AG04449 (cell line): ENCODE measurements at regions of chr9 and their contacts with region 1.

Region 1: DNA sequence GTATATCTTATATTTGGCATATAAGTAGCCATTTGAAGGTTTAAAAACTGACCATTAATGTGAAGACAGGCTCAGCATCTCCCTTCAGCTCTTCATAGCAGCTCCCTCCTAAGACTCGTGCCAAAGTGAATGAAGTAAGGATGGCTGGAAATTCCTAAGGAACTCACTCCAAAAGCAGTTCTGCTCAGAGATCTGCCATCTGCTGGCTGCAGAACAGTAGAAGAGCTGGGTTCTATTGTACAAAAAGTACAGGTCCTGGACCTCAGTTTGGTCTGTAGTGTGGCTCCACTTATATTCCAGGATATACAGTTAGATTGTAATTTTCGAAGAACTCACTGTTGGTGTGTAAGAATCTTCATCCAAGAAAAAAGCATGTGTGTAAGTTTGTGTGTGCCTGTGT is 104.9 kb upstream of the RUSC2 start:
- DNase-seq: peak; percentile 34
- H3K4me3 ChIP-seq: no peak overlapping the region
- CTCF ChIP-seq: peak; percentile 57

Region 2: GRCh38 chr9:35367451-35367850 is 17.6 kb before region 1 on chr9:
- CTCF ChIA-PET with region 1: interaction called, 22 read pairs
- POLR2A ChIA-PET with region 1: no interaction called
- DNase-seq: peak; percentile 81
- H3K4me3 ChIP-seq: no peak overlapping the region
- CTCF ChIP-seq: no peak

Region 3: GRCh38 chr9:35397216-35397698 is 12.2 kb after region 1 on chr9:
- CTCF ChIA-PET with region 1: interaction called, 12 read pairs
- POLR2A ChIA-PET with region 1: no interaction called
- DNase-seq: no peak
- H3K4me3 ChIP-seq: no peak overlapping the region
- CTCF ChIP-seq: no peak